ENCODE measurements at regions of chr18 and their contacts with region 1.

Region 1: DNA sequence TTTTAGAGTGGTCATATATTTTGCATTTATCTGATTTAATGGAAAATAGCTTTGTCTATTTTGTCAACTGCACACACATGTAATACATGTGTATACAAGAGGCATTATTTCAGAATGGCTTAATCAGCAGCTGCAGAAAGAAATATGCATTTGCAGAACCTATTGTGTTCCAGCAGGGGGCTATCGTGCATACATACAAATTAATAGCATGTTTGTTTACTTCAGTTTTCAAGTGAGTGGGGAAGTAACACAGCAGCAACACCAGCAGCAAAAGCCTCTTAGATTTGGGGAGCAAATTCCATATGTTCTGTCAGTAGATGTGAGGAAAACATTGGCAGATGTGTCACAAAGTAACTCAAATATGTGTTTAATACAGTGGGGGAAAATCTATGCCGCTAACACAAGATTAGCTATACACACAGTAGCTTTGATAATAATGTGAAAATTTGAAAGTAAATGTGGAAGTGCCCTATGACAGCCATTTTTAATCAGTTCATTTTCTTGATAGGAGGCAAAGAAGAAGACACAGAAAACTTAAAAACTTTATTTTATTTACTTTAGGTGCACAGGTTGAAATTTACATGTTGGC is 218.1 kb downstream of the WDR7 start:
- DNase-seq: peak; percentile 11
- ATAC-seq: peak; percentile 86
- H3K4me3 ChIP-seq: no peak overlapping the region
- H3K27ac ChIP-seq: no peak overlapping the region
- H3K4me1 ChIP-seq: no peaks in the 10 kb centered on the region
- H3K27me3 ChIP-seq: no peaks in the 10 kb centered on the region
- CTCF ChIP-seq: peak; percentile 73 to 78 (median 75)
- EP300 ChIP-seq: no peak
- POLR2A ChIP-seq: no peak
- RAD21 ChIP-seq: peak; percentile 91

Region 2: DNA sequence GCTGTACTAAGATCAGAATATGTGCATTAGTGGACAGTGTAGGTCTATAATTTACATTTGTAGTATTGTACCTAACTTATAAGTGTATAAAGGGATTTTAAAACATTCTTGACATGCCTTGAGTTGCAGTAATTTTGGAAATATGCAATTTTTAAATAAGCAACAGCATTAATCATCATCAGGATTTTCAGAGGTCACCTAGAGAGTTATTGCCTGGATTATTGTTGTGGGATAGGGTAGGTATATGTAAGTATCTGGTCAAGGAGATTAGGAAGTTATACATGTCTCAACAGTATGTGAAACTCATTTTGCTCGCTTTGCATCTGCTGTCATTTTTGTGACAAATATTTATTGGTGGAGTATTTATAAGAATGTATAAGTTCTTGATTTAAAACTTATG is 34.0 kb before region 1 on chr18:
- CTCF ChIA-PET with region 1: interaction called, 10 read pairs
- POLR2A ChIA-PET with region 1: no interaction called
- RAD21 ChIA-PET with region 1: no interaction called
- SMC1A ChIA-PET with region 1: interaction called, 3 read pairs
- in situ Hi-C with region 1: no loop called
- intact Hi-C with region 1: no loop called
- DNase-seq: no peak
- ATAC-seq: no peak
- H3K4me3 ChIP-seq: no peak overlapping the region
- H3K27ac ChIP-seq: no peak overlapping the region
- H3K4me1 ChIP-seq: no peaks in the 10 kb centered on the region
- H3K27me3 ChIP-seq: no peaks in the 10 kb centered on the region
- CTCF ChIP-seq: no peak
- EP300 ChIP-seq: no peak
- POLR2A ChIP-seq: no peak
- RAD21 ChIP-seq: no peak

Region 3: DNA sequence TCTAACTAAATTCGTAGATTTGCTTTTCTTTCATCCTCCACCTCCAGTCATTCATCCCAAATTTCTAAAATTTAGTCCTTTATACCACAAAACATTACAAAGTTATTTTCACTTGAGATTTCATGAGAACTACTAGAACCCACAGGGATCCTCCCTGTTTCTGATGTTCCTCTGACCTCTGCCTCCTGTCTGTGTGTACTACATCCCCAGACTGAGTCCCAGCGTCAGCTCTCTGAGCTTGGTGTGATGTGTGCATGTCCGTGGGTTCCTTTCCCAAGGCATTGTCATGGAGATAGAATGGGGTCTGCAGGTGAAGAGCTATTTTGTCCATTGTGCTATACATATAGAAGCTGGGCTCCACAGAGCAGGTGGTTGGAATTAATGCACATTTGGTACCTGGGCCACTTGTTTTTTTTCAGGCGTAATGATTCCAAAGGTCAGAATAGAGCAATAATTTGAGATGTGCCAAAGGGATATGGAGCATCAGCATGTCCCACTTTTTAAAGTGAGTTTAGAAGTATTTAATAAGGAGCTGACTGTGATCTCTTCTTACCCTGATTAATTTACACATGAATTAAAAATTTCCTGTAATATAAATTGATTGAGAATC is 126.4 kb after region 1 on chr18:
- CTCF ChIA-PET with region 1: interaction called, 15 read pairs
- POLR2A ChIA-PET with region 1: no interaction called
- RAD21 ChIA-PET with region 1: interaction called, 7 read pairs
- SMC1A ChIA-PET with region 1: interaction called, 12 read pairs
- in situ Hi-C with region 1: no loop called
- intact Hi-C with region 1: no loop called
- DNase-seq: no peak
- ATAC-seq: no peak
- H3K4me3 ChIP-seq: no peak overlapping the region
- H3K27ac ChIP-seq: no peak overlapping the region
- H3K4me1 ChIP-seq: no peaks in the 10 kb centered on the region
- H3K27me3 ChIP-seq: no peaks in the 10 kb centered on the region
- CTCF ChIP-seq: peak in 1 of 3 experiments; percentile 10; a peak in 1 of 6 replicates
- EP300 ChIP-seq: no peak
- POLR2A ChIP-seq: no peak
- RAD21 ChIP-seq: peak; percentile 46; the same call in 1 of the 2 replicates

Region 4: DNA sequence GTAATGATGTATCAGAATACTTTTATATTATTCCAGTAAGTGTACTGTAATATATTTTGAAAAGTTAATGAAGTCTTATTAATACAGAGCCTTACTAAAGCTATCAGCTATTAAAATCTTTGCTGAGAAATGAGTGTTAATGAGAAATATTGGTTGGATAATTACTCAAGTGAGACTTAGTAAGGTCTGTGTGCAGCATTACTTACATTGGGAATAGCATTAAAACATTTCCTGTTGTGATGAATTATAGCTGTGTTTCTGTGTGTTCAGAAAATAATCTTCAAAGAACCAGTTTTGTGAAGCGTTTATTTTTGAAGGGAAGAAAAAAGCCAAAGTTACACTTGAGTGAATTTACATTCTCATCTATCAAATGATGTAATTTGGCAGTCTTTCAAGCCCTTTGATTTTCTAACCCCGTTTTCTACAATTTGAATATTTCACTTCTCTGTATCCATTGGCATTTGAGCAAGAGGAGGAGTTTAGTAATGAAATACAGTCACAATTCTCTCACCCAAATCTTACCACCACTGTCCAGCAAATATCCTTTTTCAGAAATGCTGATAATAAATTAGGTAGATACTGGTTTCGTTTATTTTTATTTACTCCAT is 154.1 kb after region 1 on chr18:
- CTCF ChIA-PET with region 1: interaction called, 14 read pairs
- POLR2A ChIA-PET with region 1: no interaction called
- RAD21 ChIA-PET with region 1: interaction called, 11 read pairs
- SMC1A ChIA-PET with region 1: interaction called, 22 read pairs
- in situ Hi-C with region 1: no loop called
- intact Hi-C with region 1: no loop called
- DNase-seq: peak; percentile 55
- ATAC-seq: peak; percentile 92
- H3K4me3 ChIP-seq: 0 out of 2 replicates have a peak overlapping the region, but pooled peaks have one; percentile 5
- H3K27ac ChIP-seq: no peak overlapping the region
- H3K4me1 ChIP-seq: no peaks in the 10 kb centered on the region; the same call in 1 of the 2 replicates
- H3K27me3 ChIP-seq: no peaks in the 10 kb centered on the region
- CTCF ChIP-seq: no peak
- EP300 ChIP-seq: peak in 1 of 2 experiments; percentile 46; a peak in 1 of 4 replicates
- POLR2A ChIP-seq: no peak
- RAD21 ChIP-seq: no peak

Region 5: DNA sequence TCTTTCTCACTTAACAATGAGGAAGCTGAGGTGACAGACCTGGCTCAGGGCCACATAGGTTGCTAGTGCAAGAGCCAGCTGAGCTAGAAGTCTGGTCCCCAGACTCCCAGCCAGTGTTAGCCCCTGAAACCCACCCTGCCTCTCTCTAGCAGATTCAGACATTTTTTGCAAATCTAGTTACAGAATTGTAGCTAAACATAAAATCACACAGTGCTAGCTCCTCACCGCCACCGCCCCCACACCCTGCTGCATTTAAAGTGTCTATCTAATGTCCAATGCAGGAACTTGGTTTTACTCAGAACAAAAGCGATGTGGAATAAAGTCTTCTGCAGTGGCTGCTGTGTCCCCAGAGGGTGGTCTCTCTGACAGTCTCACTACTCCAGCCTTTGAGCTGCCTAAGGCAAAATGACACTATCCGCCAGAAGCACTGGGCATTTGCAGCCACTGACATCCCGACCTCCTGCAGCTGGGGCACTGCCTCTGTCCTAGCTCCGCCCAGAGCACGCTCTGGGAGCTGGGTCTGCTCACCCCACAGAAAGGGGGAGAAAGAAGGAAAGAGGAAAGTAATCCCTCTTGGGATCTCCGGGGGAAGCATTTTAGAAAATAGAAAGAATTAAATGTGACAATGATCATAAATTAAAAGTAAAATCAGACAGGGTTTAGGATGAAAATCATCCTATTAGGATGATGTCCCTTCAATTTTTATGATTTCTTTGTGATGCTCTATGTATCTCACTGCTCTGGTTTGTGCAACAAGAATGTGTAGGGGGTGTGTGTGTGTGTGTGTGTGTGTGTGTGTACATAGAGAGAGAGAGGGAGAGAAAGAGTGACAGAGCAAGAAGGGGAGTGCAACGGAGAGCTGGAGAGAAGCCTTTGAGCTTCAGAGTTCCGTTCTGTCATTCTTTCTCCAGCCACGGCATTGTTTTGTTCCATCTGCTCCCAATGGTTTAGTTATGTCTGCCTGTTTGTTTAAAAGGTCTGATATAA is 432.6 kb after region 1 on chr18:
- CTCF ChIA-PET with region 1: no interaction called
- POLR2A ChIA-PET with region 1: no interaction called
- RAD21 ChIA-PET with region 1: no interaction called
- SMC1A ChIA-PET with region 1: no interaction called
- in situ Hi-C with region 1: no loop called
- intact Hi-C with region 1: loop called (anchors 5 kb)
- DNase-seq: no peak
- ATAC-seq: no peak
- H3K4me3 ChIP-seq: no peak overlapping the region
- H3K27ac ChIP-seq: no peak overlapping the region
- H3K4me1 ChIP-seq: no peaks in the 10 kb centered on the region
- H3K27me3 ChIP-seq: peaks cover 0 to 2% of the 10 kb centered on the region in 2 experiments; a peak in 2 of 4 replicates
- CTCF ChIP-seq: no peak
- EP300 ChIP-seq: no peak
- POLR2A ChIP-seq: no peak
- RAD21 ChIP-seq: no peak

Measured in GM12878 (cell line).